ENCODE measurements at regions of chr7 and their contacts with region 1.

Region 1: DNA sequence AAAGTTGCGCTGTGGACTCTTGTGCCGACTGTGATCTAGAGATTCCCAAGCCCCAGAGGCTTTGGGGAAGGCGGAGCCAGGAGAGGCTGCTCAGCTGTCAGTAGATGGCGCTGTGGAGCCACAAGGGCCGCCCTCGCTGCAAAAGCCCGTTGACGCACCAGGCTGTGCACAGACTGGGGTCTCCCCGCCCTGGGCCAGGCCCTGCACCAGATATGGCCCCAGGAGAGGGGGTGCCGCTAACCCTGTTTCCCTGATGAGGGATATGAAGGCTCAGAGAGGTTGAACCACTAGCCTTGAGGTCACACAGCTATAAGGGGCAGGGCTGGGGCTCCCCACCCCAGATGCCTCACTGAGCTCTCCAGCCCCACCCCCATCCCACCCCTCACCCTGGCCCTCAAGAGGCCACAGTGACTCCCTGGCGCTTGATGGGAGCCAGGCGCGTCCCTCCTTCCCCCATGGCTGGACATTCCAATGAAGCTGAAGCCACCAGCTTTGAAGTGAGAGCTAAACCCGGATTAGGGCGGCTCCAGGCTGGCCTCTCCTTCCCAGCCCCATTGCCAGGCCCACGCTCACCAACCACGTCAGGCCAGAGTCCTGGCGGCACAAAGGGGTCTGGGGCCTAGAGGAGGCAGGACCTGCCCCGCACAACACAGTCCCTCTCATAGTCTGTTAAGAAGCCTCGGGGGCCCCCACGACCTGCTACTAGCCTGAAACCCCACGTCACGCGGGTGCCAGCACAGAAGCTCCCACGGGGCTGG is 26.4 kb downstream of the MYL10 start:
- DNase-seq: peak; percentile 90
- H3K4me3 ChIP-seq: no peak overlapping the region
- H3K27ac ChIP-seq: no peak overlapping the region
- H3K4me1 ChIP-seq: peaks cover 3% of the 10 kb centered on the region
- H3K27me3 ChIP-seq: no peaks in the 10 kb centered on the region
- CTCF ChIP-seq: peak; percentile 95

Region 2: GRCh38 chr7:101688183-101688831 is 85.6 kb after region 1 on chr7:
- CTCF ChIA-PET with region 1: no interaction called
- POLR2A ChIA-PET with region 1: no interaction called
- intact Hi-C with region 1: loop called (anchors 5 kb)
- DNase-seq: peak; percentile 81
- H3K4me3 ChIP-seq: peak overlapping the region; percentile 17
- H3K27ac ChIP-seq: no peak overlapping the region
- H3K4me1 ChIP-seq: no peaks in the 10 kb centered on the region
- H3K27me3 ChIP-seq: no peaks in the 10 kb centered on the region
- CTCF ChIP-seq: peak; percentile 96

Region 3: GRCh38 chr7:101804967-101805366 is 202.3 kb after region 1 on chr7:
- CTCF ChIA-PET with region 1: interaction called, 10 read pairs
- POLR2A ChIA-PET with region 1: no interaction called
- intact Hi-C with region 1: loop called (anchors 10 kb)
- DNase-seq: no peak
- H3K4me3 ChIP-seq: no peak overlapping the region
- H3K27ac ChIP-seq: no peak overlapping the region
- H3K4me1 ChIP-seq: no peaks in the 10 kb centered on the region
- H3K27me3 ChIP-seq: peaks cover 36% of the 10 kb centered on the region
- CTCF ChIP-seq: no peak; the same call in 1 of the 2 replicates

Region 4: GRCh38 chr7:101815835-101816493 is 213.3 kb after region 1 on chr7:
- CTCF ChIA-PET with region 1: no interaction called
- POLR2A ChIA-PET with region 1: no interaction called
- intact Hi-C with region 1: loop called (anchors 10 kb)
- DNase-seq: peak; percentile 90
- H3K4me3 ChIP-seq: peak overlapping the region; percentile 66
- H3K27ac ChIP-seq: peak overlapping the region; percentile 65
- H3K4me1 ChIP-seq: peaks cover 49% of the 10 kb centered on the region
- H3K27me3 ChIP-seq: no peaks in the 10 kb centered on the region
- CTCF ChIP-seq: no peak

Region 5: GRCh38 chr7:102236592-102237287 is 634.1 kb after region 1 on chr7:
- CTCF ChIA-PET with region 1: interaction called, 6 read pairs
- POLR2A ChIA-PET with region 1: no interaction called
- intact Hi-C with region 1: loop called (anchors 1 kb)
- DNase-seq: peak; percentile 77
- H3K4me3 ChIP-seq: no peak overlapping the region
- H3K27ac ChIP-seq: no peak overlapping the region
- H3K4me1 ChIP-seq: no peaks in the 10 kb centered on the region
- H3K27me3 ChIP-seq: no peaks in the 10 kb centered on the region
- CTCF ChIP-seq: peak; percentile 91

Region 6: DNA sequence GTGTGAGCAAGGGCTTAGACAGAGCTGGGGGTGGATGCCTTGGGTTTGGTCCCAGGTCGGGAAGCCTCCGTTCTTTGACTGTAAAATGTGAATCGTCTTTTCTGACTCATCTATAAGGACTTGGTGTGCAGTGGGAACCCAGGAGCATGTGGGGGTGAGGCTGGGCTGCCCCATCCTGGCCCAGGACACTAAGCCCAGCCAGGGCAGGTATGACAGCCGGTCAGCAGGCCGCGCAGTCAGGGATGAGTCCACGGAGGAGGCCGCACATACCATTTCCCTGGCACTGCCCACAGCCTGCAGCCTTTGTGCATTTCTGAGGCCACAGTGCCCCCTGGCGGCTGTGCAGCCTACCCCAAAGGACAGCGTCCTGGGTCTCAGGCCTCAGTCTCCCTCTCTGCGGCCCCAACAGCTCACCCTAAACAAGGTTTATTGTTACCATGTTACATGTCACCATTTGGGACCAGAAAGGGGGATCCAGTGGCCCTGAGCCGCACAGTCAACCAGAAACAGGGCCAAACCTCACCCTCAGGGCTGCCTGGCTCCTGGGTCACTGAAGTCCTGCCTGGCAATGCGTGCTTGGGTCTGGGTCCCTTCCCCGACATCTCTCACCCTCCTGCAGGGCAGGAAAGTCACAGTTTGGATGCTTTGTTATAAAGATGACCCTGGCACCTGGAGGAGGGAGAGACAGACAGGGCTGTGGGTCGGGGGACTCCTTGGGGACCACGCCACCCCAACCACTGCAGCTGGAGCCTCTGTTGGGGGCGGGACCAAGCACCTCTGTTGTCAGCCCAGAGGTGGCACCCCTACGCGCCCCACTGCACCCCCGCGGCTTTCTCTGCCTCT is 669.6 kb after region 1 on chr7:
- CTCF ChIA-PET with region 1: interaction called, 4 read pairs
- POLR2A ChIA-PET with region 1: no interaction called
- intact Hi-C with region 1: loop called (anchors 1 kb)
- DNase-seq: peak; percentile 73
- H3K4me3 ChIP-seq: no peak overlapping the region
- H3K27ac ChIP-seq: no peak overlapping the region
- H3K4me1 ChIP-seq: no peaks in the 10 kb centered on the region
- H3K27me3 ChIP-seq: no peaks in the 10 kb centered on the region
- CTCF ChIP-seq: peak; percentile 96